Motor neuron (in vitro differentiated cells): ENCODE measurements at regions of chr14 and their contacts with region 1.

Region 1: DNA sequence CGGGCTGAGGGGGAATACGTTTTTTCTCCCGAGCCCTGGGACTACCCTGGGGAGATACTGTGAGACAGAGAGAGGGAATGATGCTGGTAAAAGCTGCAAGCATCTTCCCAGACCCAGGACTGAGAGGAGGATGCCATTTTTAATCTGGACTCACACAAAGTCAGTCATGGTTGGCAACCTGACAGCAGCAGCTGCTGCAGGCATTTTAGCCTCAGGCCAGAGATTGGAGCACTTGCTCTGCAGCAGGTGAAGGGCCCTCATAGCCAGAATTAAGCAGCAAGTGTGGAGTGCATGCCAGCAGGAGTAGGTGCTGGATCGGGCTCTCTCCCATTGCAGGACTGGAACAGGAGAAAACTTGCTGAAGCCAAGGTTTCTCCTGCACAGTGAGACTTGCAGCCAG is 361.1 kb upstream of the CLEC14A start:
- ATAC-seq: no peak
- H3K4me3 ChIP-seq: no peak overlapping the region
- H3K27ac ChIP-seq: no peak overlapping the region
- H3K4me1 ChIP-seq: no peaks in the 10 kb centered on the region

Region 2: GRCh38 chr14:37903343-37904191 is 713.4 kb before region 1 on chr14:
- in situ Hi-C with region 1: loop called in 1 of 9 experiments (anchors 25 kb)
- ATAC-seq: peak in 4 of 8 experiments; percentile 19 to 79 (median 61)
- H3K4me3 ChIP-seq: no peak overlapping the region
- H3K27ac ChIP-seq: no peak overlapping the region
- H3K4me1 ChIP-seq: no peaks in the 10 kb centered on the region

Region 3: GRCh38 chr14:38522724-38523123 is 94.2 kb before region 1 on chr14:
- in situ Hi-C with region 1: no loop called
- ATAC-seq: no peak
- H3K4me3 ChIP-seq: no peak overlapping the region
- H3K27ac ChIP-seq: no peak overlapping the region
- H3K4me1 ChIP-seq: no peaks in the 10 kb centered on the region